Spleen (tissue), 13 donors: ENCODE measurements at regions of chr9 and their contacts with region 1.

Region 1: GRCh38 chr9:134778841-134779411 is 101.7 kb upstream of the FCN2 start:
- DNase-seq: no peak
- H3K4me3 ChIP-seq: no peak overlapping the region
- H3K27ac ChIP-seq: peak overlapping the region in 2 of 8 donors; percentile 30 to 36
- H3K4me1 ChIP-seq: peaks cover 0 to 47% (median 17%) of the 10 kb centered on the region in 6 donors
- H3K27me3 ChIP-seq: peaks cover 0 to 13% (median 0%) of the 10 kb centered on the region in 7 donors
- CTCF ChIP-seq: peak in 10 of 11 experiments; percentile 34 to 69 (median 58)
- POLR2A ChIP-seq: no peak

Region 2: GRCh38 chr9:134983074-134983473 is 204.1 kb after region 1 on chr9:
- intact Hi-C with region 1: loop called (anchors 5 kb)
- DNase-seq: peak; percentile 89
- H3K4me3 ChIP-seq: no peak overlapping the region
- H3K27ac ChIP-seq: peak overlapping the region in 1 of 8 donors; percentile 13
- H3K4me1 ChIP-seq: peaks cover 0 to 10% (median 8%) of the 10 kb centered on the region in 6 donors
- H3K27me3 ChIP-seq: peaks cover 0 to 7% (median 0%) of the 10 kb centered on the region in 7 donors
- CTCF ChIP-seq: peak in 10 of 11 experiments; percentile 34 to 77 (median 64)
- POLR2A ChIP-seq: no peak